Common myeloid progenitor, CD34-positive (primary cell): ENCODE measurements at regions of chr3 and their contacts with region 1.

Region 1: GRCh38 chr3:137962251-137962650 is 47.7 kb upstream of the CLDN18 start:
- DNase-seq: no peak
- H3K4me3 ChIP-seq: no peak overlapping the region
- H3K27ac ChIP-seq: no peak overlapping the region
- H3K4me1 ChIP-seq: no peaks in the 10 kb centered on the region
- H3K27me3 ChIP-seq: peaks cover 0 to 11% (median 0%) of the 10 kb centered on the region in 5 experiments

Region 2: GRCh38 chr3:137946345-137946973 is 15.8 kb before region 1 on chr3:
- CTCF ChIA-PET with region 1: interaction called, 14 read pairs
- POLR2A ChIA-PET with region 1: no interaction called
- DNase-seq: peak; percentile 56 to 74 (median 74)
- H3K4me3 ChIP-seq: no peak overlapping the region
- H3K27ac ChIP-seq: no peak overlapping the region
- H3K4me1 ChIP-seq: no peaks in the 10 kb centered on the region
- H3K27me3 ChIP-seq: no peaks in the 10 kb centered on the region